GM12878 (cell line): ENCODE measurements at regions of chr10 and their contacts with region 1.

Region 1: GRCh38 chr10:70115948-70116682 is 16.5 kb downstream of the AIFM2 start:
- DNase-seq: no peak
- ATAC-seq: peak; percentile 97
- H3K4me3 ChIP-seq: no peak overlapping the region
- H3K27ac ChIP-seq: no peak overlapping the region
- H3K4me1 ChIP-seq: no peaks in the 10 kb centered on the region
- H3K27me3 ChIP-seq: no peaks in the 10 kb centered on the region
- CTCF ChIP-seq: peak; percentile 73 to 93 (median 85)
- EP300 ChIP-seq: no peak
- POLR2A ChIP-seq: no peak
- RAD21 ChIP-seq: peak; percentile 50

Region 2: DNA sequence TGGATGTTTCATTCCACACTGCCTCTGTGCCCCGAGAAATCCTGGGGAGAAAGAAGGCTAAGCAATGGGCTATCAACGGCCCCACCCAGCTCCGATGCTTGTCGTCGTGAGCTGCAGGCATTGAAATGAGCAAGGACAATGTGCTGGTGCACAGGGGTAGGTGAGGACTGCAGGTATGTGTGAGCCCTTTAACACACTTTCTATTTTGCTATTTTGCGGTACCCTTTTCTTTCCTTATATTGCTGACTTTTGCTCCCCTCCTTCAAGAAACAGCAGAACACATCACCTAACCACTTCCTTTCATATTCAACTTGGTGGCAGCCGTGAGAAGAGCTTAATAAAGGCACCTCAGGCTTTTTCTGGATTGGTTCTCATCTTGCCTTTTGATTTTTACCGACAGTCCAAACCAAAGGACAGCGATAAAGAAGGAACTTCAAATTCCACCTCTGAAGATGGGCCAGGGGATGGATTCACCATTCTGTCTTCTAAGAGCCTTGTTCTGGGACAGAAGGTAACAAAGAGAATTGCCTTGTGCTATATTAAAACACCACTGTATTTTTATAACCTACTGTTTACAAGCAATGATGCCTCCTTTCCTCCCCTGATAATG is 22.7 kb before region 1 on chr10:
- CTCF ChIA-PET with region 1: interaction called, 58 read pairs
- POLR2A ChIA-PET with region 1: no interaction called
- RAD21 ChIA-PET with region 1: no interaction called
- SMC1A ChIA-PET with region 1: interaction called, 14 read pairs
- in situ Hi-C with region 1: no loop called
- intact Hi-C with region 1: no loop called
- DNase-seq: no peak
- ATAC-seq: peak; percentile 41
- H3K4me3 ChIP-seq: no peak overlapping the region
- H3K27ac ChIP-seq: no peak overlapping the region
- H3K4me1 ChIP-seq: peaks cover 7% of the 10 kb centered on the region; the same call in 1 of the 2 replicates
- H3K27me3 ChIP-seq: no peaks in the 10 kb centered on the region; a peak in 1 of 4 replicates
- CTCF ChIP-seq: no peak
- EP300 ChIP-seq: no peak
- POLR2A ChIP-seq: no peak
- RAD21 ChIP-seq: no peak

Region 3: GRCh38 chr10:70132098-70133029 is 16.2 kb after region 1 on chr10 and contains the start of gene AIFM2:
- CTCF ChIA-PET with region 1: interaction called, 42 read pairs
- POLR2A ChIA-PET with region 1: no interaction called
- RAD21 ChIA-PET with region 1: interaction called, 3 read pairs
- SMC1A ChIA-PET with region 1: interaction called, 11 read pairs
- in situ Hi-C with region 1: no loop called
- intact Hi-C with region 1: no loop called
- DNase-seq: no peak
- ATAC-seq: peak; percentile 91
- H3K4me3 ChIP-seq: peak within 1 kb of the TSS; percentile 83
- H3K27ac ChIP-seq: peak within 1 kb of the TSS; percentile 89
- H3K4me1 ChIP-seq: peaks cover 12% of the 10 kb centered on the region
- H3K27me3 ChIP-seq: no peaks in the 10 kb centered on the region
- CTCF ChIP-seq: peak in 2 of 3 experiments; percentile 8 to 11; a peak in 2 of 6 replicates
- EP300 ChIP-seq: 0 out of 4 replicates have a peak, but pooled peaks of 1 of the 2 experiments have one; percentile 25
- POLR2A ChIP-seq: peak; percentile 88
- RAD21 ChIP-seq: no peak
- polyA plus RNA-seq, gene AIFM2: 4.5 to 8.0 TPM

Region 4: GRCh38 chr10:70169649-70170364 is 53.7 kb after region 1 on chr10:
- CTCF ChIA-PET with region 1: interaction called, 24 read pairs
- POLR2A ChIA-PET with region 1: no interaction called
- RAD21 ChIA-PET with region 1: no interaction called
- SMC1A ChIA-PET with region 1: interaction called, 7 read pairs
- in situ Hi-C with region 1: no loop called
- intact Hi-C with region 1: no loop called
- DNase-seq: no peak
- ATAC-seq: peak; percentile 35
- H3K4me3 ChIP-seq: peak overlapping the region; percentile 91
- H3K27ac ChIP-seq: peak overlapping the region; percentile 56
- H3K4me1 ChIP-seq: peaks cover 11% of the 10 kb centered on the region
- H3K27me3 ChIP-seq: no peaks in the 10 kb centered on the region
- CTCF ChIP-seq: no peak
- EP300 ChIP-seq: no peak
- POLR2A ChIP-seq: no peak
- RAD21 ChIP-seq: no peak

Region 5: GRCh38 chr10:70197235-70197945 is 81.3 kb after region 1 on chr10:
- CTCF ChIA-PET with region 1: interaction called, 15 read pairs
- POLR2A ChIA-PET with region 1: no interaction called
- RAD21 ChIA-PET with region 1: no interaction called
- SMC1A ChIA-PET with region 1: interaction called, 5 read pairs
- in situ Hi-C with region 1: no loop called
- intact Hi-C with region 1: no loop called
- DNase-seq: no peak
- ATAC-seq: no peak
- H3K4me3 ChIP-seq: no peak overlapping the region
- H3K27ac ChIP-seq: no peak overlapping the region
- H3K4me1 ChIP-seq: no peaks in the 10 kb centered on the region; the same call in 1 of the 2 replicates
- H3K27me3 ChIP-seq: no peaks in the 10 kb centered on the region
- CTCF ChIP-seq: no peak
- EP300 ChIP-seq: no peak
- POLR2A ChIP-seq: no peak
- RAD21 ChIP-seq: no peak

Region 6: DNA sequence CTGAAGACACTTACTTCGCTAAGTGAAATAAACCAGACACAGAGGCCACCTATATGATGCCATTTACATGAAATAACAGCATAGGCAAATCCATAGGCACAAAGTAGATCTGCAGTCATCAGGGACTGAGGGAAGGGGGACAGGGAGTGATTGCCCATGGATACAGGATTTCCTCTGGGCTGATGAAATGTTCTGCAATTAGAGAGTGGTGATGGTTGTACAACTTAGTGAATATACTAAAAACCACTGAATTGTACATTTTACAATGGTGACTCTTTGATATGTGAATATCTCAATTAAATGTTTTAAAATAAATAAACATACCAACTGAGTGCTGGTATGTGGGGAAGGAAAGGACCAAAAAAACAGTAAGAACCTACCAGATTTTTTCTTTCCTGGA is 96.8 kb after region 1 on chr10:
- CTCF ChIA-PET with region 1: interaction called, 13 read pairs
- POLR2A ChIA-PET with region 1: no interaction called
- RAD21 ChIA-PET with region 1: no interaction called
- SMC1A ChIA-PET with region 1: interaction called, 3 read pairs
- in situ Hi-C with region 1: no loop called
- intact Hi-C with region 1: no loop called
- DNase-seq: no peak
- ATAC-seq: no peak
- H3K4me3 ChIP-seq: no peak overlapping the region
- H3K27ac ChIP-seq: no peak overlapping the region
- H3K4me1 ChIP-seq: no peaks in the 10 kb centered on the region
- H3K27me3 ChIP-seq: no peaks in the 10 kb centered on the region
- CTCF ChIP-seq: no peak
- EP300 ChIP-seq: no peak
- POLR2A ChIP-seq: no peak
- RAD21 ChIP-seq: no peak

Region 7: GRCh38 chr10:70283445-70284399 is 167.6 kb after region 1 on chr10 and contains the start of gene NPFFR1:
- CTCF ChIA-PET with region 1: no interaction called
- POLR2A ChIA-PET with region 1: no interaction called
- RAD21 ChIA-PET with region 1: no interaction called
- SMC1A ChIA-PET with region 1: no interaction called
- in situ Hi-C with region 1: no loop called
- intact Hi-C with region 1: no loop called
- DNase-seq: no peak
- ATAC-seq: peak; percentile 53
- H3K4me3 ChIP-seq: no peak within 1 kb of the TSS
- H3K27ac ChIP-seq: no peak within 1 kb of the TSS
- H3K4me1 ChIP-seq: no peaks in the 10 kb centered on the region
- H3K27me3 ChIP-seq: peaks cover 7 to 12% of the 10 kb centered on the region in 2 experiments
- CTCF ChIP-seq: peak in 1 of 3 experiments; percentile 15; a peak in 1 of 6 replicates
- EP300 ChIP-seq: no peak
- POLR2A ChIP-seq: no peak
- RAD21 ChIP-seq: no peak
- polyA plus RNA-seq, gene NPFFR1: not detected

Region 8: DNA sequence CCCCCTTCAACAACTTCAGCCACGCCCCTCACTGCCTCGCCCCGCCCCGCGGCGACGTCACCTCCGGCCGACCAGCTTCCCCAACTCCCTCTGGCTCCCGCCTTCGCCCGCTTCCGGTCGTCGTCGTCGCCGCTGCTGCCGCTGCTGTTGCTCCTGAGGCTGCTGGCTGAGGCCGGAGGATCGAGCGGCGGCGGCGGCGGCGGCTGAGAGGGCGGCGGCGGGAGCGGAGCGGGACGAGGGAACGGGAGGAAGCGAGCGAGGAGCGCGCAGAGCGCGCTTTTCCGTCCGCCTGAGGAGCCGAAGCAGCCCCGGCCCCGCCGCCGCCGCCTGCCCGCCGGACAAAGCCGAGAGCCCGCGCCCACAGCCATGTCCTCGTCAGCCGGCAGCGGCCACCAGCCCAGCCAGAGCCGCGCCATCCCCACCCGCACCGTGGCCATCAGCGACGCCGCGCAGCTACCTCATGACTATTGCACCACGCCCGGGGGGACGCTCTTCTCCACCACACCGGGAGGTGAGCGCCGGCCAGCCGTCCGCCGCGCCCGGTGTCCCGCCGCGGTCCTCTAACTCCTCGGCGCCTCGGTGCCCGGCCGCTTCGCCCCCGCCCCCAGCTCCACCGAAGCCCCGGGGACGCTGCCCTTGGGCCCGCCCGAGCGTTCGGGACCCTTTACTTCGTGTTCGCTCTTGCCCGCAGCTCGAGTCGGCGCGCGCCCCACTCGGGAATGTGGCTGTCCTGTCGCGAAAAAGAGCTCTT is 288.1 kb after region 1 on chr10 and contains the start of gene EIF4EBP2:
- CTCF ChIA-PET with region 1: interaction called, 10 read pairs
- POLR2A ChIA-PET with region 1: no interaction called
- RAD21 ChIA-PET with region 1: no interaction called
- SMC1A ChIA-PET with region 1: no interaction called
- in situ Hi-C with region 1: no loop called
- intact Hi-C with region 1: no loop called
- DNase-seq: peak; percentile 89
- ATAC-seq: peak; percentile 91
- H3K4me3 ChIP-seq: peak within 1 kb of the TSS; percentile 79
- H3K27ac ChIP-seq: peak within 1 kb of the TSS; percentile 73
- H3K4me1 ChIP-seq: peaks cover 14% of the 10 kb centered on the region
- H3K27me3 ChIP-seq: no peaks in the 10 kb centered on the region
- CTCF ChIP-seq: no peak
- EP300 ChIP-seq: no peak
- POLR2A ChIP-seq: peak; percentile 96
- RAD21 ChIP-seq: no peak
- polyA plus RNA-seq, gene EIF4EBP2: 14.4 to 20.4 TPM